Transverse colon (tissue), 4 donors: ENCODE measurements at regions of chr7 and their contacts with region 1.

Region 1: GRCh38 chr7:146090023-146090645 is 26.5 kb upstream of the CNTNAP2 start:
- DNase-seq: no peak
- H3K4me3 ChIP-seq: no peak overlapping the region
- H3K27ac ChIP-seq: no peak overlapping the region
- H3K4me1 ChIP-seq: no peaks in the 10 kb centered on the region
- H3K27me3 ChIP-seq: no peaks in the 10 kb centered on the region
- CTCF ChIP-seq: peak; percentile 48 to 63 (median 52)
- EP300 ChIP-seq: no peak
- POLR2A ChIP-seq: no peak

Region 2: GRCh38 chr7:145036604-145037405 is 1053.3 kb before region 1 on chr7:
- in situ Hi-C with region 1: loop called (anchors 25 kb)
- intact Hi-C with region 1: no loop called
- DNase-seq: no peak
- H3K4me3 ChIP-seq: no peak overlapping the region
- H3K27ac ChIP-seq: no peak overlapping the region
- H3K4me1 ChIP-seq: no peaks in the 10 kb centered on the region
- H3K27me3 ChIP-seq: no peaks in the 10 kb centered on the region
- CTCF ChIP-seq: peak; percentile 44 to 75 (median 71)
- EP300 ChIP-seq: no peak
- POLR2A ChIP-seq: no peak

Region 3: DNA sequence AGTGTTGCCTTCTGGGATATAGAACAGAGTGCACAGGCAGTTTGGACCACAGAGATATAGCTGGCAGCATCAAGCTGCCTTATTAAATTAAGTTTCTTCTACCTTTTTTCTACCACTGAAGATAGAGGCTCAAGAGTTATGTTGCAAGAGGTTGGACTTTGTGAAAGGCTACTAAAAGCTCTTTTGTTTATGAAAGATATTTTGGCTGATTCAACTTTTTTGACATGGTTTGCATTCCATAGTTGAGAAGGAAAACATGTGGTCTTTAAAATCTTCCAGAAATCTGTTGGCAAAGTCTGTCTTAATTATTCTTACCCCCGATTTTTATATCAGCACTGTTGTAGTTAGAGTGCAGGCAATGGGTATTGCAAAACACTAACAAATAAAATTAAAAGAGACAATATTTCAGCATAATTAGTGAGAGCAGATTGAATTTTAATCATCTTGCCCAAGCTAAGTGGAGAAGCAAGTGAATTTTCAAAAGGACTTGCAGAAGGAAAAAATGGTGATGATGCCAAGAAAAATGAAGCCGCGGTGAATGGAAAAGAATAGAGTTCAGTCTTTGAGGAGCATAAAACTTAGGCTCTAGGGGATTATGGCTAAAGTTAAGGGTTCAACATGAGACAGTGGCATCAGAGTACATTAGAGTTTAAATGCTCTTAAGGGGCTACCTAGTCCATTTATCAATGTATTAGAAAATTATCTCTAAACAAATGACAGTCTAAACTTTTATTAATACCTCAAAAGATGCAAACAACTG is 424.5 kb before region 1 on chr7:
- in situ Hi-C with region 1: no loop called
- intact Hi-C with region 1: no loop called
- DNase-seq: no peak
- H3K4me3 ChIP-seq: no peak overlapping the region
- H3K27ac ChIP-seq: no peak overlapping the region
- H3K4me1 ChIP-seq: no peaks in the 10 kb centered on the region
- H3K27me3 ChIP-seq: no peaks in the 10 kb centered on the region
- CTCF ChIP-seq: no peak
- EP300 ChIP-seq: no peak
- POLR2A ChIP-seq: no peak

Region 4: DNA sequence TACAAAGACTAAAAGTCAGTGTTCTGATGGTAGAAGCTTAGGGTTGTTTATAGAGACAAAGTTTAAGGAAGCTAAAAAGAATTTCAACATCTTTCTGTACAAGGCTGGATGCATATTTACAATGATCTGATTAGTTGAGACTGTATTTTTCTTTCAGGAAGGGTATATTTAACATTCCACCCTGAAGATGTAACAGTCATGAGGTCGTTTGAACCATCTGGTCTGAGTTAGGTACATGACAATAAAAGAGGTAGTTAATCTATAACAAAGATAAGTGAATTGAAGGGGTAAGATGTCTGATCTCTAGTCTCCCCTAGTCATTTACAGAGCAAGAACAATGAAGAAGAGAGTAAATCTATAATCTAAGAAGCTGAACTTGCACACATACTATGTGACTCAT is 847.7 kb after region 1 on chr7:
- in situ Hi-C with region 1: no loop called
- intact Hi-C with region 1: no loop called
- DNase-seq: no peak
- H3K4me3 ChIP-seq: no peak overlapping the region
- H3K27ac ChIP-seq: no peak overlapping the region
- H3K4me1 ChIP-seq: no peaks in the 10 kb centered on the region
- H3K27me3 ChIP-seq: no peaks in the 10 kb centered on the region
- CTCF ChIP-seq: no peak
- EP300 ChIP-seq: no peak
- POLR2A ChIP-seq: no peak